ENCODE measurements at regions of chr7 and their contacts with region 1.

Region 1: GRCh38 chr7:70040970-70041766 is 442.9 kb downstream of the AUTS2 start:
- H3K4me3 ChIP-seq: no peak overlapping the region
- H3K27ac ChIP-seq: no peak overlapping the region; the same call in 1 of the 2 replicates
- H3K4me1 ChIP-seq: peaks cover 37% of the 10 kb centered on the region
- CTCF ChIP-seq: no peak

Region 2: DNA sequence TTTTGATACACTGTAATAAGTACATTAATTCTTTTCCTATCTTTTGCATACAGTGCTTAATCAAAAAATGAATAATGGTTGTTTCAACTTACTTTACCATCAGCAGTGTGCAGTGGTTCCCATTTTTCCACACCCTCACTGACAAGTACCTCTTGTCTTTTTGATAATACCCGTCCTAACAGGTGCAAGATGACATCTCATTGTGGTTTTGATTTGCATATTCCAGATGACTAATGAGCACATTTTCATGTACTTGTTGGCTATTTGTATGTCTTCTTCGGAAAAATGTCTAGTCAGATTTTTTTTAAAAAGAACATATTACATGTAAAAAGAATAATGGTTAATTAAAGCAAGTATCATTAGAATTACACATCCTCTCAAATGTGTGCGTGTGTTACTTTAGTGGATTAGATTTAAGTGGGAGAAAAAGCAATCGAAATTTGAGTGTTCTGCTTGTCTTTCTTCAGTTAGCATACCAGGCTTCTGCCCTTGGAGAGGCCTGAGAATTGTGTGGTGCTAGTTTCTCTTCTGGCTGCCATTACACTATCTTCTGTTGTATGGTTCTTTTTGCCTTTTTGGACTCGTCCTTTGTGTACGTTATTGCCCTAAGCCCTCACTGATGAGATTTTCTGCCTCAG is 151.7 kb before region 1 on chr7:
- CTCF ChIA-PET with region 1: no interaction called
- POLR2A ChIA-PET with region 1: no interaction called
- H3K4me3 ChIP-seq: no peak overlapping the region
- H3K27ac ChIP-seq: no peak overlapping the region; the same call in 1 of the 2 replicates
- H3K4me1 ChIP-seq: peaks cover 21% of the 10 kb centered on the region
- CTCF ChIP-seq: no peak

Region 3: DNA sequence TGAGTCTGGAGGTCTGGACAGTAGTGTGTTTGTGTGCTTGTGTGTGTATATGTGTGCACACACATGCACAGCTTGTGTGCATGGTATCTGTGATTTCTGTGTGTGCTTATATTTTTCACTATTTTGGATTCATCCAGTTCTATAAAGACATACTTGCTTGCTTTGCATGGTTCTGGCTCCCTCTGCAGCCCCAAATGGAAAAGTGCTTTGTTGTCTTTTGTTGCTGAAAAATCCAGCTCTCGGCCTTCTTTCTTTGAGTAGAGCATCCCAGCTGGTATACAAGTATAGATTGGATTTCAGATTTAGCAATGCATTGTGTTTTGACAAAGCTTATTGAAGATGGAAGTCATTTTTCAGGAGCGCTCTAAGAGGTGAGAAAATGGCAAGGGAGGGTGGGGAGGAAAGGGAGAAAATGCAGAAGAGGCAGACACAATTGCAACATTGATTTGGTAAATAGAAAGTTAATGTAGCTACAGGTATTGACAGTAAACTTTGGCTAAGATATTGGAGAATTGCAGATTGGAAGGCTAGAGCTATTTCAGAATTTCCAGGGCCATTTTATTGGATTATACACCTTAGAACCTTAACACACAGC is 109.0 kb before region 1 on chr7:
- CTCF ChIA-PET with region 1: interaction called, 17 read pairs
- POLR2A ChIA-PET with region 1: no interaction called
- H3K4me3 ChIP-seq: no peak overlapping the region
- H3K27ac ChIP-seq: no peak overlapping the region
- H3K4me1 ChIP-seq: peaks cover 19% of the 10 kb centered on the region
- CTCF ChIP-seq: peak; percentile 60

Region 4: DNA sequence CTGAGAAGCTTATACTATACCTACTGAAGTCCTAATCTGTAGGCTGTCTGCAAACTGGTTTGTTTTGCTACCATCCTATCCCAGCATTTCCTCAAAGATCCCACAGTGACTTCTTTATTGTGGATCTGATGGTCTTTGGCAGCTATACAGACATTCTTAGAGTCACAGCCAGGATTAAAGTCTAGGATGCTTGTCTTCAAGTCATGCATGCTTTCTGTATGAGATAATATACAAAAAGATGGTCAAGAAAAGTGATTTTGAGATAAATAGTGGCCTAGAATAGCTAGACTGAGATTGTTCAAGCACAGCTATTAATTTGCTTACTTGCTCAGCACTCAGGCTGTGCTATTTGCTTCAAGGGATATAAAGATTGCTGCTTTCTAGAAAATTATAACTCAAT is 11.5 kb after region 1 on chr7:
- CTCF ChIA-PET with region 1: interaction called, 14 read pairs
- POLR2A ChIA-PET with region 1: interaction called, 4 read pairs
- H3K4me3 ChIP-seq: no peak overlapping the region
- H3K27ac ChIP-seq: no peak overlapping the region
- H3K4me1 ChIP-seq: peaks cover 21% of the 10 kb centered on the region
- CTCF ChIP-seq: no peak

Region 5: GRCh38 chr7:70092314-70093204 is 51.4 kb after region 1 on chr7:
- CTCF ChIA-PET with region 1: interaction called, 4 read pairs
- POLR2A ChIA-PET with region 1: interaction called, 11 read pairs
- H3K4me3 ChIP-seq: no peak overlapping the region; the same call in none of the 2 replicates
- H3K27ac ChIP-seq: peak overlapping the region; percentile 84
- H3K4me1 ChIP-seq: peaks cover 31% of the 10 kb centered on the region
- CTCF ChIP-seq: no peak

Region 6: GRCh38 chr7:70154521-70155180 is 113.5 kb after region 1 on chr7:
- CTCF ChIA-PET with region 1: interaction called, 70 read pairs
- POLR2A ChIA-PET with region 1: no interaction called
- H3K4me3 ChIP-seq: no peak overlapping the region
- H3K27ac ChIP-seq: no peak overlapping the region
- H3K4me1 ChIP-seq: no peaks in the 10 kb centered on the region; the same call in 1 of the 2 replicates
- CTCF ChIP-seq: no peak

Region 7: DNA sequence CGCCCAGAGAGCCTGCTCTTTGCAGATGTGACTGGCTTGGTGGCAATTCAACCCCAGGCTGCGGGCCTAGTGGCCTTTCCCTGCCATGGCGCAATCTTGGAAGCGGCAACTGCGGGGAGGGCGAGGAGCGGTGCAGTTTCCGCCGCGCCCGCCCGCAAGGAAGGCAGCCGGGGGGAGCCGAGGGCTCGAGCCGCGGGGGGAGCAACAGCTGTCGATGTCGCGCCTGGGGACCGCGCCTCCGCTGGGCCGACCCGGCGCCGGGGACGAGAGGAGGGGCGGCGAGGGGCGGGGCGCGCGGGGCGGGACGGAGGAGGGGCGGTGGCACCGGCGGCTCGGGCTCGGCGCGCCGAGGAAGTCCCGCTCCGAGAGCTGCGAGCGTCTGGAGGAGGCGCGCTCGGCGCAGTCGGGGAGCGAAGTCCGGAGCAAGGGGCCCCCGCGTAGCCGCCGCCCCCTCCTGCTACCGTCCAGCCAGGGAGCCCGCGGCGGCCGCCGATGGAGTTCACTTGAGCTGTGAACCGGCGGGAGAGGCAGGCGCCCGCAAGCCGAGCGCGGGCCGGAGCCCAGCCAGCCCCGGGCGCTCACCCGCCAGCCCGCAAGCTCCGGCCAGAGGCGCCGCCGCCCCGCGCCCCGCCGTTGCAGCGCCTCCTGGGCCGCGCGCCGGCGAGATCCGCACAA is 652.7 kb after region 1 on chr7:
- CTCF ChIA-PET with region 1: interaction called, 13 read pairs
- POLR2A ChIA-PET with region 1: interaction called, 7 read pairs
- H3K4me3 ChIP-seq: peak overlapping the region; percentile 92
- H3K27ac ChIP-seq: peak overlapping the region; percentile 97
- H3K4me1 ChIP-seq: peaks cover 10% of the 10 kb centered on the region
- CTCF ChIP-seq: peak; percentile 25; the same call in 1 of the 2 replicates